Activated CD8-positive, alpha-beta memory T cell treated with anti-CD3 and anti-CD28 coated beads, Interleukin-2, amount 10 ng/mL, durations not matched to agents 7 days and 5 days (primary cell): ENCODE measurements at regions of chr20 and their contacts with region 1.

Region 1: DNA sequence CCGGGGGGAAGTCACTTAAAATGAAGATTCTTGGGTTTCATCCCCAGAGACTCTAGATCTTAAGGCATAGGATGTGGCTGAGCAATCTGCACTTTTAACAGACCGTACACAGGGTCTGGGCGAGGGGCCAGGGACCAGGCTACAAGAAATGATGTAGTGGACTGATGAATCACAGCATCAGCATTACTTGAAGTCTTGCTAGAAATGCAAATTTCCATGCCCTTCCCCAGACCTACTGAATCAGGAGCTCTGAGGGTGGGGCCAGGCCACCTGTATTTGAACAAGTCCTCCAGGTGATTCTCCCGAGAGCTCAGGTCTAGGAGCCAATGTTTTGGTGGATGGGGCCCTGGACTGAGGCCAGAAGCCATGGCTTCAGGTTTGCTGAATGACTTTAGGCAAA is 168.4 kb downstream of the DOK5 start:
- DNase-seq: no peak
- ATAC-seq: no peak
- H3K4me3 Mint-ChIP-seq: no peak overlapping the region
- H3K27ac Mint-ChIP-seq: no peak overlapping the region
- H3K4me1 Mint-ChIP-seq: no peaks in the 10 kb centered on the region
- H3K27me3 Mint-ChIP-seq: no peaks in the 10 kb centered on the region

Region 2: DNA sequence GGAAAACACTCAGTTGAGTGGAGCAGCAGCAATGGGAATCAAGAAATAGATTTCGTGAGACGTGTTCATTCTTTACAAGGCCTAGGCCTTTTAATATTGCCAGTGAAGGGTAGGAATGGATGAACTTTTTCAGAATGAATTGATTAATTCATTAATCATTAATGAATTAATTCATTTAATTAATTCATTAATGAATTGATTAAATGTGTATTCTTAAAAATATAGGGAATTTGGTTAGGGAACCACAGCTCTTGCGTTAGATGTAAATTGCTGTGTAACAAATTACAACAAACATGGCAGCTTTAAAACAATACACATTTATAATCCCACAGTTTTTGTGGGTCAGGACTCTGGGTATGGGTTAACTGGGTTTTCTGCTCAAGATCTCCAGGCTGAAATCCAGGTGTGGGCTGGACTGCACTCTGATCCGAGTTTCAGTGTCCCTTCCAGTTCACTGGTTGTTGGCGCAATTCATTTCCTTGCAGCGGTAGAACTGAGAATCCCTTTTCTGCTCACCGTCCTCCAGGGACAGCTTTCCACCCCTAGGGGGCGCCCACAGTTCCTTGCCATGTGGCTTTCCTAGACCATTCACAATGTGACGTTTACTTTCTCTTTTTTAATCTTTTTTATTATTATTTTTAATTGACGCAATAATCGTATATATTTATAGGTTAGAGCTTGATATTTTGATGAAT is 540.6 kb before region 1 on chr20:
- CTCF ChIA-PET with region 1: interaction called, 12 read pairs
- DNase-seq: peak; percentile 84
- ATAC-seq: peak; percentile 78
- H3K4me3 Mint-ChIP-seq: no peak overlapping the region
- H3K27ac Mint-ChIP-seq: no peak overlapping the region
- H3K4me1 Mint-ChIP-seq: peaks cover 2% of the 10 kb centered on the region
- H3K27me3 Mint-ChIP-seq: peaks cover 4% of the 10 kb centered on the region

Region 3: GRCh38 chr20:54676719-54677118 is 32.9 kb after region 1 on chr20:
- CTCF ChIA-PET with region 1: no interaction called
- DNase-seq: no peak
- ATAC-seq: no peak
- H3K4me3 Mint-ChIP-seq: no peak overlapping the region
- H3K27ac Mint-ChIP-seq: no peak overlapping the region
- H3K4me1 Mint-ChIP-seq: no peaks in the 10 kb centered on the region
- H3K27me3 Mint-ChIP-seq: peaks cover 4% of the 10 kb centered on the region